ENCODE measurements at regions of chr9 and their contacts with region 1.

Region 1: GRCh38 chr9:21110708-21111576 is 30.7 kb downstream of the IFNW1 start:
- DNase-seq: peak; percentile 78
- H3K4me3 ChIP-seq: no peak overlapping the region
- H3K27ac ChIP-seq: no peak overlapping the region
- H3K4me1 ChIP-seq: no peaks in the 10 kb centered on the region
- CTCF ChIP-seq: peak; percentile 96

Region 2: GRCh38 chr9:19925817-19926503 is 1185.0 kb before region 1 on chr9:
- CTCF ChIA-PET with region 1: no interaction called
- POLR2A ChIA-PET with region 1: no interaction called
- intact Hi-C with region 1: loop called (anchors 1 kb)
- DNase-seq: peak; percentile 72
- H3K4me3 ChIP-seq: no peak overlapping the region
- H3K27ac ChIP-seq: no peak overlapping the region
- H3K4me1 ChIP-seq: no peaks in the 10 kb centered on the region
- CTCF ChIP-seq: peak; percentile 96

Region 3: GRCh38 chr9:20356403-20357035 is 754.4 kb before region 1 on chr9:
- CTCF ChIA-PET with region 1: no interaction called
- POLR2A ChIA-PET with region 1: no interaction called
- intact Hi-C with region 1: loop called (anchors 1 kb)
- DNase-seq: peak; percentile 65
- H3K4me3 ChIP-seq: no peak overlapping the region
- H3K27ac ChIP-seq: no peak overlapping the region
- H3K4me1 ChIP-seq: peaks cover 6% of the 10 kb centered on the region
- CTCF ChIP-seq: peak; percentile 79

Region 4: DNA sequence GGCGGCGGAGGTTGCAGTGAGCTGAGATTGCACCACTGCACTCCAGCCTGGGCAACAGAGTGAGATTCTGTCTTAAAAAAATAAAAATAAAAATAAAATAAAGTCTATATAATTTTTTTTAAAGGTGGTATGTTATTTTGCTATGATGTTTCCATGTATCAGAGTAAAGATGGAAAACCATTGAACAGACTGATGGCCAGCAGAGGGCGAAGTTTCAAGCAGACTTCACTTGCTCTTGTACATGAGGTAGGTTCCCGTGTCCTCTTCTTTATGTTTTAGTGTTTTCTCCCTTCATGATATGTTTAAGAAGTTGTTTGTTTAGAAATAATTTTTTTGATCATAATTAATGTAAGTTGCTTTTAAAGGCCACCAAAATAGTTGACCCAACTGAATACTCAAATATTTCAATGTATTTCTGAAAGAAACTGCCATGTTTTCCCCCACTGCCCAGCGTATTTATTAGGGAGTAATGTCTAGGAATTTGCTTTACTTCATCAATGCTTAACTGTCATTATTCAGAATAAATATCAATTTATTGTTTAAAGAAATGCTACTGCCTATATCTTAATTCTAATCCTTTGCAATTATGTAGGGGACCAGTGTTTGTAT is 225.9 kb before region 1 on chr9:
- CTCF ChIA-PET with region 1: no interaction called
- POLR2A ChIA-PET with region 1: interaction called, 6 read pairs
- intact Hi-C with region 1: loop called (anchors 2 kb)
- DNase-seq: peak; percentile 50
- H3K4me3 ChIP-seq: no peak overlapping the region
- H3K27ac ChIP-seq: no peak overlapping the region
- H3K4me1 ChIP-seq: no peaks in the 10 kb centered on the region
- CTCF ChIP-seq: peak; percentile 77

Region 5: DNA sequence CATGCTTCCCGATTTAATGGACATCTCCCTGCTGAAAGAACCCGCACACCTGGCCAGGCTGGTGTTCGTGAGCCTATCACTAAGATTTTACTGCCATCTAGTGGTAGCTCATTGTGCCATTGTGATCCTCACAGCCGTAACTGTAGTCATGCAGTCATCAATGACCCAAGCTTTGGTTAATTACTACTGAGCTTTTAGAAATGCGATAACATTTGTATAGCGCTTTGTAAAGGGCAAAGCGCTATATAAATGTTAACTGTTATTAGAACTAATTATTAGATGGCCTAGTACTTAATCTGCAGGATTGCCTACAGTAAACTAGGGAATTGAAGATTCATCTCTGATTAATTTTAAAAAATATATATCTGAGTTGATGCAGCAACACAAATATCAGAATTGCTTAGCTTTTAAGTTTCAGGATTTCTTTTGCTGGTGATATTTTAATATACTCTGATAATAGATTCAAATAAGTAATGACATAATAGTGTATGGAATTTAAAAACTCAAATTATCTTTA is 169.7 kb before region 1 on chr9:
- CTCF ChIA-PET with region 1: interaction called, 3 read pairs
- POLR2A ChIA-PET with region 1: no interaction called
- intact Hi-C with region 1: loop called (anchors 5 kb)
- DNase-seq: peak; percentile 84
- H3K4me3 ChIP-seq: no peak overlapping the region
- H3K27ac ChIP-seq: no peak overlapping the region
- H3K4me1 ChIP-seq: no peaks in the 10 kb centered on the region
- CTCF ChIP-seq: peak; percentile 95

Region 6: GRCh38 chr9:21078717-21079116 is 32.2 kb before region 1 on chr9:
- CTCF ChIA-PET with region 1: interaction called, 3 read pairs
- POLR2A ChIA-PET with region 1: no interaction called
- intact Hi-C with region 1: loop called (anchors 1 kb)
- DNase-seq: peak; percentile 37
- H3K4me3 ChIP-seq: no peak overlapping the region
- H3K27ac ChIP-seq: no peak overlapping the region
- H3K4me1 ChIP-seq: no peaks in the 10 kb centered on the region
- CTCF ChIP-seq: peak; percentile 70